ENCODE measurements at regions of chr15 and their contacts with region 1.

Region 1: DNA sequence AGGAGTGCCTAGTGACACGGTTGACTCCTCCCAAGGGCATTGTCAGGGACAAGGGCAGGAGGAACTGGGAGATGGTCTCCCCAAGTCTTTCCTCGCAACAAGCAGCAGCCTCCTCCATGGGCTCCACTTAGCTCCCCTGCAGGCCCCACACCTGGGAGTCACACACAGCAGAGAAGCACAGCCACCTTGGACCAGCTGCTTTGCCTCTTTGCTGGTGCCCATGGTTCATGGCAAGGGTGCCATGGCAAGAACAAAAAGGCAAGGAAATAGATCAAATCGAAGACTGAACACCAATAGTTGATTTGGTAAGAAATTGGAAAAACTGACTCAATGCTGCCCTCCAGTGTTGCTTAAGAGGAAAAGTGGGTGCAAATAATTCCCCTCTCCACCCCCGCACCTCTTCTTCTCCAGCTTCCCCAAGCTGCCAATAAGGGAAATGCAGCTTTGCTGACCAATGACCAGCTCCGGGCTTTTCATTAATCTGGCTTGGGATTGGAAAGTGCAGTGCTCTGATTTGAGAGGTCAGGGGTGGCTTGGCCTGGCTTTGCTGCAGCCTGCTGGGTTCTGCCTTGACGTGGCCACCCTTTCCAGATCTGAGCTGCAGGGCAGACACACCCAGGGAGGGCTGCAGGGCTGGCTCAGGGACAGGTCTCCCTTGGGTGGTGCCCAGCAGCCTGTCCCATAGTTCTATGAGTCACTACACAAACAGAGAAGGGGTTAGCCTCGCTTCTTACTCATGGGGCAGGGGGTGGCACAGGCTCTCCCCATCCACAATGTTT is 162.0 kb downstream of the KLF13 start:
- DNase-seq: peak; percentile 91 to 97
- ATAC-seq: peak; percentile 82 to 93
- H3K4me3 ChIP-seq: no peak overlapping the region
- H3K27ac ChIP-seq: peak overlapping the region; percentile 63 to 67
- H3K4me1 ChIP-seq: peaks cover 25% of the 10 kb centered on the region
- CTCF ChIP-seq: peak; percentile 95
- EP300 ChIP-seq: no peak
- POLR2A ChIP-seq: no peak
- RAD21 ChIP-seq: peak; percentile 92 to 97

Region 2: DNA sequence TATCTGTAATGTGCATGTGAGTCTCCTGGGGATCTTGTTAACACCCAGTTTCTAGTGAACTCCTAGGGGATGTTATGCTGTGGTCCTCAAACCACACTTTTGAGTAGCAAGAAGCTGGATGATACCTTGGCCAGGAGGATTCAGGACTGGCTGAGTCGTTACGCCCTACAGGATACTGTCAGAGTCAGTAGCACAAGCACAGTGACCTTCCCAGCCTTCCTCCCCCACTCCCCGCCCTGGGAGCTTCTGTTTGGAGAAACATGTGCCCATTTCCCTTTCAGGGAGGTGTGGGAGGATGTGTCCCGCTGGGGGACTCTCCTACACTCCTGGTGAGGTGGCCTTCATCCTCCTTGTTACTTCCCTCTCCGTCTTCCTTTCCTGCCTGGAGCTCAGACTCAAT is 310.7 kb before region 1 on chr15:
- CTCF ChIA-PET with region 1: interaction called, 10 read pairs
- POLR2A ChIA-PET with region 1: no interaction called
- DNase-seq: no peak
- ATAC-seq: peak in 1 of 2 experiments; percentile 37; a peak in 2 of 6 replicates
- H3K4me3 ChIP-seq: no peak overlapping the region
- H3K27ac ChIP-seq: no peak overlapping the region
- H3K4me1 ChIP-seq: no peaks in the 10 kb centered on the region
- CTCF ChIP-seq: no peak
- EP300 ChIP-seq: no peak
- POLR2A ChIP-seq: no peak
- RAD21 ChIP-seq: no peak

Region 3: GRCh38 chr15:31215490-31216214 is 273.0 kb before region 1 on chr15:
- CTCF ChIA-PET with region 1: interaction called, 90 read pairs
- POLR2A ChIA-PET with region 1: interaction called, 3 read pairs
- DNase-seq: peak; percentile 85 to 91
- ATAC-seq: peak; percentile 77 to 89
- H3K4me3 ChIP-seq: peak overlapping the region; percentile 69
- H3K27ac ChIP-seq: peak overlapping the region; percentile 96 to 97
- H3K4me1 ChIP-seq: peaks cover 21% of the 10 kb centered on the region
- CTCF ChIP-seq: peak; percentile 83
- EP300 ChIP-seq: no peak
- POLR2A ChIP-seq: peak; percentile 22; the same call in 1 of the 2 replicates
- RAD21 ChIP-seq: peak; percentile 72 to 88

Region 4: GRCh38 chr15:31381801-31382712 is 106.6 kb before region 1 on chr15:
- CTCF ChIA-PET with region 1: interaction called, 10 read pairs
- POLR2A ChIA-PET with region 1: no interaction called
- DNase-seq: no peak
- ATAC-seq: peak; percentile 25 to 49; a peak in 3 of 6 replicates
- H3K4me3 ChIP-seq: no peak overlapping the region
- H3K27ac ChIP-seq: peak overlapping the region in 1 of 2 experiments; percentile 66; a peak in 3 of 6 replicates
- H3K4me1 ChIP-seq: peaks cover 13% of the 10 kb centered on the region; the same call in 2 of the 3 replicates
- CTCF ChIP-seq: no peak
- EP300 ChIP-seq: no peak
- POLR2A ChIP-seq: no peak
- RAD21 ChIP-seq: no peak

Region 5: GRCh38 chr15:31412824-31413223 is 75.8 kb before region 1 on chr15:
- CTCF ChIA-PET with region 1: interaction called, 13 read pairs
- POLR2A ChIA-PET with region 1: no interaction called
- DNase-seq: no peak
- ATAC-seq: no peak
- H3K4me3 ChIP-seq: no peak overlapping the region
- H3K27ac ChIP-seq: no peak overlapping the region
- H3K4me1 ChIP-seq: no peaks in the 10 kb centered on the region
- CTCF ChIP-seq: no peak
- EP300 ChIP-seq: no peak
- POLR2A ChIP-seq: no peak
- RAD21 ChIP-seq: no peak

Region 6: DNA sequence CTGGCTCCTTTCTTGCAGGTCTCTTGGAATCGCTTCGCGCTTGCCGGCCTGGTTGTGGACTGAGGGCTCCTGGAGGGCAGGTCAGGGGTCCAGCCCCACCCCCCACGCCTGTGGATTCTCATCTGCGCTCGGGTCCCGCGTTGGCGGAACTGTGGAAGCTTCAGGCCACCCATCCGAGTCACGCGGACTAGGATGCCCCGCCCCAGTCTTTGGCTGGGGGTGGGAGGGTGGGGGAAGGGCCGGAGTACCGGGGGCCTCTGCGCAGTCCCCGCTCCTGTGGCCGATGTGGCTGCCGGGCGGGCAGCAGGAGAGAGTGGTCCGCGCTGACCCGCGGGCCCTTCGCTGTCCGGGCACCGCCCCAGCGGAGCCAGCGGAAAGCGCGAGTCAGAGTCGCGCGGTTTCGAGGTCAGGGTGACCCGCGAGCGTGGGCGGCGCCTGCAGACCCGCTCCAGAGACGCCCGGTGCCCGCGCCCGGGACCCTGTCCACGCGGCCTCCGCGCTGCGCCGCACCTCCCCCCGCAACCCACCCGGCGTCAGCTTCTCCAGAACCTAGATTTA is 47.8 kb before region 1 on chr15:
- CTCF ChIA-PET with region 1: interaction called, 254 read pairs
- POLR2A ChIA-PET with region 1: interaction called, 7 read pairs
- DNase-seq: no peak
- ATAC-seq: peak; percentile 30 to 67
- H3K4me3 ChIP-seq: peak overlapping the region; percentile 62
- H3K27ac ChIP-seq: peak overlapping the region; percentile 91 to 93
- H3K4me1 ChIP-seq: peaks cover 37% of the 10 kb centered on the region
- CTCF ChIP-seq: no peak
- EP300 ChIP-seq: no peak
- POLR2A ChIP-seq: peak; percentile 56
- RAD21 ChIP-seq: no peak

Region 7: DNA sequence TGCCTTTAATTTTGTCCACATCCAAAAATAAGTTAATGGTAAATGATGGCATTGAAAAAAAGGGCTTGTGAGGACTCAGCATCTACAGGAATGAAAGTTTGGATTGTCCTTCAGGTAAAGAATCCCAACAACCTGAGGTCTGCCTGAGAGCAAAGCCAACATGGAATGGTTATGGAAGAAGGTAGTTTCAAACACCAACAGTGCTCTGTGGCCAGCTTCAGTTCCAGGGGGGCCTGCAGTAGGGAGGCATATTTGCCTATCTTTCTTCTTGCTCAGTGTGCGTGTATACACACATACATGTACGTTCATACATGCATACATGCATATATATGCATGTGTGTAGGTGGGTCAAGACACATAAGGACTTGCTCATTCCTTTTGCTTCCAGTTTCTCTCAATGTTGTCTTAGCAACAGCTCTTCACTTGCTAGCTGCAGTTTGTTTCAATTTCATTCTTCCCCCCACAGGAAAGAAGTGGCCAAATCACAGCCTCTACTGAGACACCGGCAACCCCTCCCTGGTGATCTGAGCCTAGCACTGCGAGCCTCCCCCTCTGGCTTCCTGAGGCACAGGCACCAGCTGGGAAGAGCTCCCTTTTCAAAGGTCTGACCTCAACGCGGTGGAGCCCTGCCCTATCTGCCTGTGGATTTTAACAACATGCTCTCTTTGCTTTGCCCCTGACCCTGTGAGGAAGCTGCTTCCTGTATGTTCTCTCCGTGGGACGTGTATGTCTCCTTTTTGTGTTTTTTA is 15.8 kb before region 1 on chr15:
- CTCF ChIA-PET with region 1: interaction called, 162 read pairs
- POLR2A ChIA-PET with region 1: no interaction called
- DNase-seq: no peak
- ATAC-seq: no peak
- H3K4me3 ChIP-seq: no peak overlapping the region
- H3K27ac ChIP-seq: no peak overlapping the region
- H3K4me1 ChIP-seq: peaks cover 9% of the 10 kb centered on the region; the same call in 2 of the 3 replicates
- CTCF ChIP-seq: no peak
- EP300 ChIP-seq: no peak
- POLR2A ChIP-seq: no peak
- RAD21 ChIP-seq: no peak

Measured in A549 (cell line).